ENCODE measurements at regions of chr6 and their contacts with region 1.

Region 1: DNA sequence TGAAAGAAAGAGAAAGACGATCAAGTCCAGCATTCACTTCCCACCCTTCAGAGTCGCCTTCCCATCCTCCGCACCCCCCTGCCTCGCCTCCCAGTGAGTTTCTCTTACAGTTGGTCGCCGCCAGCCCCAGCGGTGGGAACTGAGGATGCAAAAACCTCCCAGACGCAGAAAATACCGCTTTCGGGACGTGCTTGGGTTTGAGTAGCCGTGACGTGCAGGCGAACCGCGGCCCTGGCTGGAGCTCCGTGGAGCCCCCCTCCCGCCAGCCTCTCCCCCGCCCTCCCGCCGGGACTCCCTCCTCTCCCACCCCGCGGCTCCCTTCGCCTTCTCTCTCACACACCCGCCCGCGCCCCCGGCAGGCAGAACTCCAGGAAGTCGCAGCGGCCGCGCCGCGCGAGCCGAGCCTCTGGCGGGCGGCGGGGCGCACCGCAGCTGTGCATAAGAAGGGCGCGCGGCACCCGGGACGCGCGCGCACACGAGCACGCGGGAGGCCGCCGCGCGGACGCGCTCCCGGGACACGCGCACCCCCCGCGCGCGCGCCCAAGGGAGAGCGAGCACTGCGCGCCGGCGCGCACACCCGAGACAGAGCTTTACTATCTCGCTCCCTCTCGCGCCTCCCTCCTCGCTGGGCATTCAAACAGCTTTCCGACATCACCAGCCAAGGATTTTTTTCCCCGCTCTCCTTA is at the start of gene ADGRB3:
- DNase-seq: peak; percentile 80 to 92 (median 88)
- H3K4me3 ChIP-seq: peak within 1 kb of the TSS; percentile 64 to 94 (median 76)
- H3K27ac ChIP-seq: no peak within 1 kb of the TSS
- H3K4me1 ChIP-seq: peaks cover 0 to 28% (median 14%) of the 10 kb centered on the region in 4 experiments
- H3K27me3 ChIP-seq: peaks cover 9 to 61% (median 22%) of the 10 kb centered on the region in 5 experiments

Region 2: DNA sequence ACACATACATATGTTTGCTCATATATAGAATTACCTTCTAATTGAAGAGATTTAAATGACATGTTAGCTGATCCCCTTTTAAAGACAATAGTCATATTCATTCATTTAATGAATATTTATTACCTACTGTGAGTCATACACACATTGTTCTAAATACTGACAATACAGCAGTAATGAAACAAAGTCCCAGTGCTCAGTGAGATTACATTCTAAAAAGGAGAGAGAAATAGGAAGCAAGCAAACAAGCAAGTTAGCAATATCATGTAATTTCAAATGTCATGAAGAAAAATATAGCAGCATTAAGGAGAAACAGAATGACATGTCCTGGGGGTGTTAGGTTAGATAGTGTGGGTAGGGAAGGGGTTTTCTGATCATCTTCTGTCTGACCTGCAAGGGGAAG is 136.6 kb after region 1 on chr6:
- CTCF ChIA-PET with region 1: interaction called, 146 read pairs
- POLR2A ChIA-PET with region 1: no interaction called
- DNase-seq: no peak
- H3K4me3 ChIP-seq: no peak overlapping the region
- H3K27ac ChIP-seq: no peak overlapping the region
- H3K4me1 ChIP-seq: no peaks in the 10 kb centered on the region
- H3K27me3 ChIP-seq: no peaks in the 10 kb centered on the region

Measured in common myeloid progenitor, CD34-positive (primary cell).